Astrocyte of the cerebellum (primary cell): ENCODE measurements at regions of chr3 and their contacts with region 1.

Region 1: GRCh38 chr3:82957696-82958095 is 1196.3 kb upstream of the GBE1 start:
- DNase-seq: no peak
- H3K4me3 ChIP-seq: no peak overlapping the region
- CTCF ChIP-seq: no peak

Region 2: DNA sequence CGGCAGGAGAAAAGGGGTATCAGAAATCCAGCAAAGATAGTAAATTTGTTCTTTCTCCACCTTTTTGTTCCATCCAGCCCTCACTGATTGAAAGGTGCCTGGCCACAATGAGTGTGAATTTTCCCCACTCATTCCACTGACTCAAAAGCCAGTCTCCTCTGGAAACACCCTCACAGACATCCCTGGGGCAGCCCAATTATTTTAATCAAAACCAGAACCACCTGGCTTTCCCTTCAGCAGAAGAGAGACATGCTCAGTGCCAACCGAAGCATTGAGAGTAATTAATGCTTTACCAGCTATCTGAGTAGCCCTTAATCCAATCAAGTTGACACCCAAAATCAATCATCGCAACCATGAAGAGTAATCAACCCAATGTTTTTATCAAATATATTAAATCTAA is 66.7 kb before region 1 on chr3:
- in situ Hi-C with region 1: loop called (anchors 10 kb)
- DNase-seq: no peak
- H3K4me3 ChIP-seq: no peak overlapping the region
- CTCF ChIP-seq: no peak

Region 3: DNA sequence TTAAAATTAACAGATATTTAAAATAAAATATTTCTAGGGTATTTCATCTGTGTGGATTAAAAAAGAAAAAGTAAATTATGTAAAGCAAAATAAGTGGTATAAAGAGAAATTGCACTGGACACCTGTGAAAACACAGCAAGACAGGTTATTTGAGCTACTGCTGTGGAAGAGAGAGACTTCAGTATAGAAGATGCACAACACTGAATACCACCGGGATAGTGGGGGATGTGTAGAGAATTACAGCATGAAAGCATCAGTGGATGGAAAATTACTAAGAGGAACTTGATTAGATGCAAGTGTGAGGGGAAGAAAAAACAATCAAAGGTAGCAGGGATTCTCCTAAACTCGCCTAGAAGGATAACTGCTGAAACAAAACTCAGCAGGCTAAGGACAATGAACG is 46.2 kb after region 1 on chr3:
- in situ Hi-C with region 1: loop called (anchors 5 kb)
- DNase-seq: no peak
- H3K4me3 ChIP-seq: no peak overlapping the region
- CTCF ChIP-seq: no peak

Region 4: DNA sequence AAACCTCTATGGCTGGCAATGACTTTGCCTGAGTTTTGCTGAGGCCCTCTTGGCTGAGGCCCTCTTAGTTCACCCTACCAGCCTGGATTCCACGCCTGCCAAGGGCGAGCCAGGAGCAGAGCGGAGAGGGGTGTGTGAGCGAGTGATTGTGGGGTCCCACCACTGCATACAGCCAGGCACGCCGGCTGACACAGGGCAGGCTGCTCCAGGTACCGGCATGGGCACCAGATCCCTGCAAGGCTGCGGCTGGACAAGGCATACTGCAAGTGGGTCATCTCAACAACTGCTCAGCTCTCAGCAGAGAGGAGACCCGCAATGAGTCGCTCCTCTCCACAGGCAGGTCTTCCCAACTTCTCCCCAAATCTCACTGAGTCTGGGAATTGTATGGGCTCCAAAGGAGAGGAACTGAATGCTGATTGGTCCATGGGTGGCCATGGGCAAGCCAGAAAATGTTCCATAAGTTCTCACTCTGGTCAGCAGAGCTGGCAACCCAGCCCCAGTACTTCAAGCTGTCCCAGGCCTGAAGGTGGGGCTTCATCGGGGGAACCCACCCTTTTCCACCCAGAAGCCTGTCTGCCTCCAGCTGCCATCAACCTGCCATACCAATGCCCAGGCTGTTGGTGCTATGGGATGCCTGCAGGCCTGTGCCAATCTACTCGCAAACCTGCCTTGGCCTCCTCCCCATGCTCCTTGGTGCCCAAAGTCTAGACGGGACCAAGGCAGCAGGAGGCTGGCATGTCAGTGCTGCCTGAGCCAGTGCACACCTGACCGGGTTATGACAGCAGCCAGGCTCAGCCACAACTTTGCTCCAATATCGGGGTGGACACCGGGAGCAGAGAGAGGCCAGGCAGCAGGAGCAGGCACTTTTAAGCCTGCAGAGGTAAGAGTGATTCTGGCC is 77.4 kb after region 1 on chr3:
- in situ Hi-C with region 1: no loop called
- DNase-seq: no peak
- H3K4me3 ChIP-seq: no peak overlapping the region
- CTCF ChIP-seq: no peak